Right lobe of liver (tissue), 6 donors: ENCODE measurements at regions of chr22 and their contacts with region 1.

Region 1: GRCh38 chr22:43036282-43036829 is 21.4 kb upstream of the PACSIN2 start:
- DNase-seq: no peak
- ATAC-seq: peak; percentile 18 to 46 (median 27)
- H3K4me3 ChIP-seq: no peak overlapping the region
- H3K27ac ChIP-seq: no peak overlapping the region
- H3K4me1 ChIP-seq: no peaks in the 10 kb centered on the region
- H3K27me3 ChIP-seq: no peaks in the 10 kb centered on the region
- CTCF ChIP-seq: no peak
- POLR2A ChIP-seq: no peak

Region 2: GRCh38 chr22:42863349-42863961 is 172.9 kb before region 1 on chr22:
- intact Hi-C with region 1: loop called in 1 of 2 experiments (anchors 10 kb)
- DNase-seq: no peak
- ATAC-seq: no peak
- H3K4me3 ChIP-seq: no peak overlapping the region
- H3K27ac ChIP-seq: no peak overlapping the region
- H3K4me1 ChIP-seq: peaks cover 0 to 3% (median under 1%) of the 10 kb centered on the region in 4 donors
- H3K27me3 ChIP-seq: no peaks in the 10 kb centered on the region
- CTCF ChIP-seq: no peak
- POLR2A ChIP-seq: no peak